Esophagus squamous epithelium (tissue), 5 donors: ENCODE measurements at regions of chr4 and their contacts with region 1.

Region 1: GRCh38 chr4:26330186-26330787 is 9.5 kb downstream of the RBPJ start:
- DNase-seq: no peak
- H3K4me3 ChIP-seq: no peak overlapping the region
- H3K27ac ChIP-seq: no peak overlapping the region
- H3K4me1 ChIP-seq: peaks cover 0 to 63% (median 5%) of the 10 kb centered on the region in 3 donors
- H3K27me3 ChIP-seq: no peaks in the 10 kb centered on the region
- CTCF ChIP-seq: peak; percentile 56 to 74 (median 66)
- POLR2A ChIP-seq: no peak

Region 2: DNA sequence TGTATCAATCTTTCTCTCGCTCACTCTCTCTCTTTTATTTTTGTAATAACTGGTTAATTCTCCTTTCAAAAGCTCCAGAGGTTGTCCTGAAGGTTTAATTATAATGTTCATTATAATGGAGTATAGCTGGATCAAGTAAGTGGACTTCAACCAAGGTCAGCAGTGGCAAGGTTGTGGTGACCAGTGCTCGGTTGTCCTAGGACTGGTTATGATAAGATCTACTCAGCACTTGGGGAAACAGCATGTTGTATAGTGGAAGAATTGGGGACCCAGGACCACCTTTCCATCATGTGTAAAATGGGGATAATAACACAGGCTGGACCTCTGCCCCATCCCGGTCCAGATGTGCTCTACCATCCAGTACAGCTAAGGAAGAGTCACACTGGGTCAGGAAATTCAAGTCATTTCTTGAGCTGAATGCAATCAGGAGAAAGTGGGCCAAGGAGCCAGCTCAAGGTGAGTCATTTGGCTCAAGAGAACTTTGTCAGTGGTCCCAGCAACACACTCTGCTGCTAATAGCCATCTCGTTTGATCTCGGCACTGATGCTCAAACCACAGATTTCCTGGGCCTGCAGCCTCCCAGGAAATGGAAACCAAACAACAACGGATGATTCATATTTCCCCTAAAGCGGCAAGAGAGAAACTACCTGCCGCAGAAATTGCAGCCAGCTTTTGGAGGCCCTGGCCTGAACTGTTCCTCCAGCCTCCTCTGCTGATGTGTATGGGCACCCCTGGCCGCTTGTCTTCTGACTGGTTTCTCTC is 133.1 kb before region 1 on chr4:
- intact Hi-C with region 1: no loop called
- DNase-seq: no peak
- H3K4me3 ChIP-seq: no peak overlapping the region
- H3K27ac ChIP-seq: peak overlapping the region in 2 of 4 donors; percentile 25 to 28
- H3K4me1 ChIP-seq: peaks cover 0 to 11% (median 4%) of the 10 kb centered on the region in 3 donors
- H3K27me3 ChIP-seq: no peaks in the 10 kb centered on the region
- CTCF ChIP-seq: no peak
- POLR2A ChIP-seq: no peak

Region 3: GRCh38 chr4:26362745-26363439 is 32.6 kb after region 1 on chr4:
- intact Hi-C with region 1: no loop called
- DNase-seq: no peak
- H3K4me3 ChIP-seq: no peak overlapping the region
- H3K27ac ChIP-seq: no peak overlapping the region
- H3K4me1 ChIP-seq: peaks cover 0 to 24% (median 0%) of the 10 kb centered on the region in 3 donors
- H3K27me3 ChIP-seq: no peaks in the 10 kb centered on the region
- CTCF ChIP-seq: no peak
- POLR2A ChIP-seq: no peak

Region 4: DNA sequence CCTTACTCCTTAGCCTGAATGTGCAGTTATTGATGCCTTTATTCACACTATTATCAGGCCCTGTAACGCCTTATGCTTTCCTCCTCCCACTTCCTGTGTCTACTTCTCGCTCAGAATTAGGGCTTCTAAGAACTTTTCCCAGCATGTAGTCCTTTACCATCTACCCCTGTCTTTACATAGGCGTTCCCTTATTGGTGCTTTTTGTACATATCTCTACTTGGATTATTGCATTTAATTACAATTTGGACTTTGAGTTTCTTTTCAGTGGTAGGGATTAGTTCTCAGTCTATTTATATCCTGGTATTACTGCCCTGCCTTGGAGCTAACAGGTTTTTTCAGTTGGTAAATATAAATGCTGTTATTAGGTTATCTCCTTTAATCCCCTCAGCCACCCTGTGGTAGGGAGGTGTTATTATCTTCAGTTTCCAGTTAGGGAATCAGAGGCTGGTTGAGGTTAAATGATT is 74.5 kb after region 1 on chr4:
- intact Hi-C with region 1: loop called (anchors 5 kb)
- DNase-seq: no peak
- H3K4me3 ChIP-seq: no peak overlapping the region
- H3K27ac ChIP-seq: no peak overlapping the region
- H3K4me1 ChIP-seq: peaks cover 0 to 12% (median 0%) of the 10 kb centered on the region in 3 donors
- H3K27me3 ChIP-seq: no peaks in the 10 kb centered on the region
- CTCF ChIP-seq: peak in 1 of 6 experiments; percentile 38
- POLR2A ChIP-seq: no peak

Region 5: GRCh38 chr4:26459054-26459755 is 128.9 kb after region 1 on chr4:
- intact Hi-C with region 1: no loop called
- DNase-seq: no peak
- H3K4me3 ChIP-seq: no peak overlapping the region
- H3K27ac ChIP-seq: no peak overlapping the region
- H3K4me1 ChIP-seq: peaks cover 0 to 5% (median 0%) of the 10 kb centered on the region in 3 donors
- H3K27me3 ChIP-seq: peaks cover 0 to 5% (median 0%) of the 10 kb centered on the region in 4 donors
- CTCF ChIP-seq: peak in 5 of 6 experiments; percentile 39 to 65 (median 44)
- POLR2A ChIP-seq: no peak